ENCODE measurements at regions of chr19 and their contacts with region 1.

Region 1: GRCh38 chr19:35249146-35249847 is 495 bp downstream of the LSR start:
- DNase-seq: no peak
- H3K4me3 ChIP-seq: peak overlapping the region; percentile 34 to 89 (median 75)
- H3K27ac ChIP-seq: peak overlapping the region in 1 of 2 experiments; percentile 71
- H3K4me1 ChIP-seq: peaks cover 0 to 30% (median 19%) of the 10 kb centered on the region in 4 experiments
- H3K27me3 ChIP-seq: peaks cover 0 to 18% (median 6%) of the 10 kb centered on the region in 5 experiments

Region 2: GRCh38 chr19:35236638-35237400 is 12.5 kb before region 1 on chr19:
- CTCF ChIA-PET with region 1: no interaction called
- POLR2A ChIA-PET with region 1: no interaction called
- DNase-seq: peak in 1 of 3 donors; percentile 40
- H3K4me3 ChIP-seq: no peak overlapping the region
- H3K27ac ChIP-seq: no peak overlapping the region
- H3K4me1 ChIP-seq: peaks cover 0 to 11% (median 3%) of the 10 kb centered on the region in 4 experiments
- H3K27me3 ChIP-seq: peaks cover 0 to 2% (median 0%) of the 10 kb centered on the region in 5 experiments

Region 3: GRCh38 chr19:35264268-35265125 is 15.2 kb after region 1 on chr19:
- CTCF ChIA-PET with region 1: interaction called, 10 read pairs
- POLR2A ChIA-PET with region 1: no interaction called
- DNase-seq: no peak
- H3K4me3 ChIP-seq: no peak overlapping the region
- H3K27ac ChIP-seq: peak overlapping the region in 1 of 2 experiments; percentile 32
- H3K4me1 ChIP-seq: peaks cover 16 to 51% (median 34%) of the 10 kb centered on the region in 4 experiments
- H3K27me3 ChIP-seq: no peaks in the 10 kb centered on the region